Heart left ventricle (tissue), 16 donors: ENCODE measurements at regions of chr4 and their contacts with region 1.

Region 1: GRCh38 chr4:70839589-70840093 is at the start of gene GRSF1:
- DNase-seq: peak; percentile 95 to 98 (median 96)
- ATAC-seq: peak; percentile 96 to 99 (median 97)
- H3K4me3 ChIP-seq: peak within 1 kb of the TSS; percentile 58 to 100 (median 92)
- H3K27ac ChIP-seq: peak within 1 kb of the TSS; percentile 80 to 99 (median 96)
- H3K4me1 ChIP-seq: peaks cover 0 to 31% (median 19%) of the 10 kb centered on the region in 12 donors
- H3K27me3 ChIP-seq: no peaks in the 10 kb centered on the region
- CTCF ChIP-seq: peak in 4 of 12 donors; percentile 12 to 42 (median 26)
- POLR2A ChIP-seq: peak in 1 of 2 donors; percentile 62
- total RNA-seq, gene GRSF1: 70.7 to 114 (median 89.2) TPM

Region 2: DNA sequence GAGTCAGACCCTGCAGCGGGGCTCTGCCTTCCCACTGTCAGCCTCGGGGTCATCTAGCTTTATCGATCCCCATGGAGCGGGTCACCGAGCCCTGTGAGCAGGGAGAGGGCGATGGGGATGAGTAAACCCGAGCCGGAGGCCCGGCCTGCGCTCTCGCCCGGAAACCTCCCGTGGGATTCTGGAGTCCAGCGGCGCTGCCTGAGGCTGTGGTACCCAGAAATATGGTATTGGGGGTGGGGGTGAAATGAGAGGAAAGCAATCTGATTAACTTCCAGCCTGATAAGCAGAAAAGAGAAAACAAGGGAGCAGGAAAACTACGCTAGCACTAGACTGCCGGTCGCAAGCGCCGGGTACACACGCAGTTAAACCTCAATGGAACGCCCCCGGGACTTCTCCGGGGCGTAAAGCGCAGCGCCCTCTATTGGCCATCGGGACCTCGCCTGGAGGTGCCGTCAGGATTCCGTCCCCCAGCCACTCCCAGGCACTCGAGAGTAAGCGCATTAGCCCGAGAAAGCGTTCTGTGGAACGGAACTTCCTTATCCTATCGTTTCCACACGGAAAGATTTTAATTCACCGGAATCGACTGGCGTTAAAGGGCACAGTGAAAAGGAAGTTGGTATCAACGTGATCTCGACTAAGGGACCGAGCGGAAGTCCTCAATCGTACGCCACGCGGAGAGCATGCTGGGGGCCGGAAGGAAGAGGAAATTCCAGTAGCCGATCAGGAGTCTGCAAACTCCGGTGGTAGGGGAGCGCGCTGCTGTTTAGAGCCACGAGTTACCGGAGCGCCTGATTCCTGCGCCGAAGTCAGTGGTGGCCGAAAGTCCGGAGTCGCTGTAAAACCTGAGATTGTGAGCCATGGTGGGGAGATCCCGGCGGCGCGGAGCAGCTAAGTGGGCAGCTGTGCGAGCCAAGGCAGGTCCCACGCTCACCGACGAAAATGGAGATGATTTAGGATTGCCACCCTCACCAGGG is 151.5 kb before region 1 on chr4 and contains the start of gene UTP3:
- intact Hi-C with region 1: loop called in 3 of 10 experiments (anchors 1 to 5 kb)
- DNase-seq: peak; percentile 96 to 97 (median 97)
- ATAC-seq: peak; percentile 97 to 99 (median 98)
- H3K4me3 ChIP-seq: peak within 1 kb of the TSS; percentile 69 to 98 (median 90)
- H3K27ac ChIP-seq: peak within 1 kb of the TSS; percentile 84 to 97 (median 92)
- H3K4me1 ChIP-seq: peaks cover 4 to 48% (median 32%) of the 10 kb centered on the region in 12 donors
- H3K27me3 ChIP-seq: no peaks in the 10 kb centered on the region
- CTCF ChIP-seq: peak; percentile 95 to 100 (median 96)
- POLR2A ChIP-seq: peak in 1 of 2 donors; percentile 48
- total RNA-seq, gene UTP3: 7.3 to 22.4 (median 17.4) TPM

Region 3: GRCh38 chr4:70714079-70714887 is 125.4 kb before region 1 on chr4:
- intact Hi-C with region 1: loop called in 3 of 10 experiments (anchors 5 to 10 kb)
- DNase-seq: no peak
- ATAC-seq: peak in 2 of 4 donors; percentile 74 to 75
- H3K4me3 ChIP-seq: no peak overlapping the region
- H3K27ac ChIP-seq: peak overlapping the region in 1 of 12 donors; percentile 71
- H3K4me1 ChIP-seq: peaks cover 0 to 49% (median 6%) of the 10 kb centered on the region in 12 donors
- H3K27me3 ChIP-seq: no peaks in the 10 kb centered on the region
- CTCF ChIP-seq: no peak
- POLR2A ChIP-seq: no peak

Region 4: DNA sequence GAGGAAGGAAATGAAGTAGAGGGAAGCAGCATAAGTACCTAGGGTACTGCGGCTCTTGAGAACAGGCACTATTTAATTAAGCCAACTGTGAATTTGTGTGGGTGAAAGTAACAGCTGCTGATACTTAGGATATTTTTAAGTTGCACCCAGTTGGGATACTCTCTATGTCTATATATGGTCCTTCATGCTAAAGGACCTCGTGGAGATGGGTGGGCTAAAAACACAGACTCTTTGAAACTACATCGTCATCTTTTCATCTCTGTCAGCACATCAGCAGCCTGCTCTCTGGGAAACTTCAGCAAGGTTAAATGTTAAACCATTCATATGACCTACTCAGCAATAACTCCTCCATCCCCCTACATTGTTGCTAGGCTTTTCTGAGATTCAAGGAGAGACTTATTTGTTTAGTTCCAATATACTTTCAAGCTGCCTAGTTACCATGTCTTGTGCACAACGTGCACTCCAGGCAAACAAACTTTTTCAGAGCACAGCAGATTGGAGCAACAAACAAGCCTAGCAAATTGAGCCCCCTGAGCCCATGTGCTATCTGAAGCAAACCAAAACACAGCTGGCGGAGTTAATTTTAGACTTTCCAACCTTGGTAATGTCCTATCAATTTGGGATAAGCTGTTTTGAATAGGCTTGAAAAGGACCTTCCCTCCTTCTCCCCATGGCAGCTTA is 56.3 kb after region 1 on chr4:
- intact Hi-C with region 1: loop called in 6 of 10 experiments (anchors 5 to 10 kb)
- DNase-seq: no peak
- ATAC-seq: peak; percentile 21 to 75 (median 52)
- H3K4me3 ChIP-seq: no peak overlapping the region
- H3K27ac ChIP-seq: peak overlapping the region; percentile 18 to 82 (median 64)
- H3K4me1 ChIP-seq: peaks cover 0 to 22% (median 10%) of the 10 kb centered on the region in 12 donors
- H3K27me3 ChIP-seq: no peaks in the 10 kb centered on the region
- CTCF ChIP-seq: no peak
- POLR2A ChIP-seq: no peak

Region 5: DNA sequence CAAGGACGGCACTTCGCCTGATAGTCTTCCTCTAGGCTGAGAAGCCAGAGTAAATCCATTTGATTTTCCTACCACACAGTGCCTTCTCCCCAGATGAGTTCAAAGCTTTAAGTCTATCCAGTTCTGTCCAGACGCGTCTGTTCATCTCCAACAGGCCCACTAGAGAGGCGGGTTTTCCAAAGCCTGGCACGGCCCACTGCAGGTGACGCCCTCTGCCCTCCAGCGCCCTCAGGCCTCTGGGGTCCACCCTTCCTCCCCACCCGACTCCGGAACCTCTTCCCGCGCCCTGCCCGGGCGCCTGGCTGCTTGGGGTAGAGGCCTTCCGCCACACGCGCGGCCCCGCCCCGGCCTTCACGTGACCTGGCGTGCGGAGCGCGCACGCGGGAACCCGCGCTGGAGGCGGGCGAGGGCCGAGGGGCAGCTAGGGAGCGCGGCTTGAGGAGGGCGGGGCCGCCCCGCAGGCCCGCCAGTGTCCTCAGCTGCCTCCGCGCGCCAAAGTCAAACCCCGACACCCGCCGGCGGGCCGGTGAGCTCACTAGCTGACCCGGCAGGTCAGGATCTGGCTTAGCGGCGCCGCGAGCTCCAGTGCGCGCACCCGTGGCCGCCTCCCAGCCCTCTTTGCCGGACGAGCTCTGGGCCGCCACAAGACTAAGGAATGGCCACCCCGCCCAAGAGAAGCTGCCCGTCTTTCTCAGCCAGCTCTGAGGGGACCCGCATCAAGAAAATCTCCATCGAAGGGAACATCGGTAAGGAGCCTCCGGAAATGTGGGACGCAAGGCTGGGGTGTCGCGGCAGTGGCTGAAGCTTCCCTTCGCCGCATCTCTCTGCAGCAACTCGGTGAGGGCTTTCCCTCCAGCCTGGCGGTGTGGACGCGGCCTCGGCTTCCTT is 153.8 kb after region 1 on chr4 and contains the start of gene DCK:
- intact Hi-C with region 1: loop called in 8 of 10 experiments (anchors 1 to 10 kb)
- DNase-seq: peak; percentile 92 to 96 (median 93)
- ATAC-seq: peak; percentile 96 to 99 (median 98)
- H3K4me3 ChIP-seq: peak within 1 kb of the TSS; percentile 40 to 93 (median 81)
- H3K27ac ChIP-seq: peak within 1 kb of the TSS; percentile 71 to 95 (median 87)
- H3K4me1 ChIP-seq: peaks cover 0 to 54% (median 18%) of the 10 kb centered on the region in 12 donors
- H3K27me3 ChIP-seq: no peaks in the 10 kb centered on the region
- CTCF ChIP-seq: peak in 1 of 12 donors; percentile 29
- POLR2A ChIP-seq: peak in 1 of 2 donors; percentile 72
- total RNA-seq, gene DCK: 4.6 to 12.6 (median 6.8) TPM